ENCODE measurements at regions of chr12 and their contacts with region 1.

Region 1: GRCh38 chr12:26113853-26114719 is 10.8 kb downstream of the BHLHE41 start:
- DNase-seq: peak; percentile 95 to 96 (median 96)
- ATAC-seq: peak; percentile 83 to 97 (median 92)
- H3K4me3 ChIP-seq: peak overlapping the region; percentile 3 to 65 (median 54)
- H3K27ac ChIP-seq: peak overlapping the region; percentile 88 to 98 (median 93)
- H3K4me1 ChIP-seq: peaks cover 0 to 56% (median 36%) of the 10 kb centered on the region in 12 donors
- H3K27me3 ChIP-seq: no peaks in the 10 kb centered on the region
- CTCF ChIP-seq: peak in 4 of 12 donors; percentile 22 to 43 (median 34)
- POLR2A ChIP-seq: peak in 1 of 2 donors; percentile 89

Region 2: DNA sequence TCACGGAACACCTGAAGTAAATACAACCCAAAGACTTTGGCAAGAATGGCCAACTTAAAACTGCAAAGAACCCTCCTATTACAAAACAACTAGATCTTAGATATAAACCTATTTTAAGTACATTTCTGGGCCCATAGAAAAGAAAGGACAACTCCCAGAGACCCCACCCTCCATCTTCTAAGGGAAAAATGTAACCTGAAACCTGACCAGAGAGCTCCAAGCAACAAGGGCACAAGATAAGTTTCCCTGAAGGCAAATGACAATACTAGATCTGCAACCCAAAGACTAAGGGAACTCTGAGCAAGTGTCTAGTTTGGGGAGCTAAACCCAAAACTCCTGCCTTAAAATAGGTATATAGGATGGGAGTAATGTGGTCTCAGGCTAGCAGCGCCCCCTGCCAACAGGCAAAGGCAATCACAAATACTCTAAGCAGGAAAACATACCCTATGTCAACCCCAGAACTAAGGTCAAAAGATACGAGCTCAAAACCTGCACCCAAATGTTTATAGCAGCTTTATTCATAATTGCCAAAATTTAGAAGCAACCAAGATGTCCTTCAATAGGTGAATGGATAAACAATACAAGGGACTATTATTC is 500.0 kb after region 1 on chr12:
- intact Hi-C with region 1: loop called in 1 of 10 experiments (anchors 10 kb)
- DNase-seq: peak in 1 of 5 donors; percentile 25
- ATAC-seq: peak in 3 of 4 donors; percentile 44 to 59 (median 51)
- H3K4me3 ChIP-seq: no peak overlapping the region
- H3K27ac ChIP-seq: no peak overlapping the region
- H3K4me1 ChIP-seq: peaks cover 0 to 4% (median 0%) of the 10 kb centered on the region in 12 donors
- H3K27me3 ChIP-seq: no peaks in the 10 kb centered on the region
- CTCF ChIP-seq: peak; percentile 21 to 69 (median 50)
- POLR2A ChIP-seq: no peak

Measured in heart left ventricle (tissue), 16 donors.